CD4-positive, alpha-beta T cell (primary cell): ENCODE measurements at regions of chr5 and their contacts with region 1.

Region 1: GRCh38 chr5:150846654-150847333 is 473 bp downstream of the IRGM start:
- DNase-seq: peak; percentile 22 to 91 (median 44)
- ATAC-seq: peak; percentile 92
- H3K4me3 ChIP-seq: peak overlapping the region; percentile 48
- H3K4me3 Mint-ChIP-seq: peak overlapping the region; percentile 87
- H3K27ac ChIP-seq: peak overlapping the region in 1 of 2 donors; percentile 31
- H3K27ac Mint-ChIP-seq: peak overlapping the region; percentile 87
- H3K4me1 ChIP-seq: peaks cover 17% of the 10 kb centered on the region
- H3K4me1 Mint-ChIP-seq: peaks cover 31% of the 10 kb centered on the region
- H3K27me3 ChIP-seq: no peaks in the 10 kb centered on the region
- H3K27me3 Mint-ChIP-seq: no peaks in the 10 kb centered on the region
- CTCF ChIP-seq: peak; percentile 84

Region 2: DNA sequence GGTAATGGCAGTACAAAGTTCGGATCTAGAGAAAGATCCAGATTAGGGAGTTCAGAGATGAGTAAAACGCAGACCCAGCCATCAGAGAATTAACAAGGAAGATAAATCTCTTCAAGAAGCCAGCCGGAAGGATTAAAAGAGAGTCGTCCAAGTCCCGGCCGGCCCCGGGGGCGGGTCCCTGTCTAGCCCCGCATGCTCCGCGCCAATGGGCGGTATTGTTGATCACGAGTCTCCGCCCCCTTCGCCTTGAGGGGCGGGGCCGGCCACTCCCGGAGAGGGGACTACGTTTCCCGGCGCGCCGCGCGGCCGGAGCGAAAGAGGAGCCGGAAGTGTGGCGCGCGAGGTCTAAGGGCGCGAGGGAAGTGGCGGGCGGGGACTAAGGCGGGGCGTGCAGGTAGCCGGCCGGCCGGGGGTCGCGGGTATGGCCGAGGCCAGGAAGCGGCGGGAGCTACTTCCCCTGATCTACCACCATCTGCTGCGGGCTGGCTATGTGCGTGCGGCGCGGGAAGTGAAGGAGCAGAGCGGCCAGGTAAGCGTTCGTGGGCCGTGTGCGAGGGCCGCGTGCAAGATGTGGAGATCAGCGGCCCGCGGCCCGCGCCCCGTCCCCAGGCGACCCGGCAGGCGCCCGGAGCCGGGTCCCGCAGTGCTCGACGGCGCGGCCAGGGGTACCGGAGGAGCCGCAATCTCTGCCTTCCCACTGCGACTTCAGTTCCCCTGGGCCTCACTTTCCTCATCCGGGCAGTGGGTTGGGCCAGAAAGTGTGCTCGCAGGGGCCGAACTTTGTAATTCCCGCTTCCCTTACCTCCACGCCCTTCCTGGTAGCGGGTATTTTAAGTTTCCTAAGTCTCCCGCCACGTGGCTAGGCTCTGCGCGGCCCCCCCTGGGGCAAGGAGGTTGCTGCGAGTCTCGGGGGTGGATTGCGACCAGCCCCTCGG is 489.2 kb before region 1 on chr5 and contains the start of gene TCOF1:
- CTCF ChIA-PET with region 1: no interaction called
- POLR2A ChIA-PET with region 1: no interaction called
- intact Hi-C with region 1: loop called in 1 of 2 experiments (anchors 5 kb)
- DNase-seq: peak; percentile 93 to 98 (median 97)
- ATAC-seq: peak; percentile 98
- H3K4me3 ChIP-seq: peak within 1 kb of the TSS; percentile 86
- H3K4me3 Mint-ChIP-seq: peak within 1 kb of the TSS; percentile 89
- H3K27ac ChIP-seq: peak within 1 kb of the TSS in 1 of 2 donors; percentile 46
- H3K27ac Mint-ChIP-seq: peak within 1 kb of the TSS; percentile 73
- H3K4me1 ChIP-seq: peaks cover 28% of the 10 kb centered on the region
- H3K4me1 Mint-ChIP-seq: peaks cover 47% of the 10 kb centered on the region
- H3K27me3 ChIP-seq: no peaks in the 10 kb centered on the region
- H3K27me3 Mint-ChIP-seq: no peaks in the 10 kb centered on the region
- CTCF ChIP-seq: no peak
- total RNA-seq, gene TCOF1: 40.4 to 43.2 TPM

Region 3: DNA sequence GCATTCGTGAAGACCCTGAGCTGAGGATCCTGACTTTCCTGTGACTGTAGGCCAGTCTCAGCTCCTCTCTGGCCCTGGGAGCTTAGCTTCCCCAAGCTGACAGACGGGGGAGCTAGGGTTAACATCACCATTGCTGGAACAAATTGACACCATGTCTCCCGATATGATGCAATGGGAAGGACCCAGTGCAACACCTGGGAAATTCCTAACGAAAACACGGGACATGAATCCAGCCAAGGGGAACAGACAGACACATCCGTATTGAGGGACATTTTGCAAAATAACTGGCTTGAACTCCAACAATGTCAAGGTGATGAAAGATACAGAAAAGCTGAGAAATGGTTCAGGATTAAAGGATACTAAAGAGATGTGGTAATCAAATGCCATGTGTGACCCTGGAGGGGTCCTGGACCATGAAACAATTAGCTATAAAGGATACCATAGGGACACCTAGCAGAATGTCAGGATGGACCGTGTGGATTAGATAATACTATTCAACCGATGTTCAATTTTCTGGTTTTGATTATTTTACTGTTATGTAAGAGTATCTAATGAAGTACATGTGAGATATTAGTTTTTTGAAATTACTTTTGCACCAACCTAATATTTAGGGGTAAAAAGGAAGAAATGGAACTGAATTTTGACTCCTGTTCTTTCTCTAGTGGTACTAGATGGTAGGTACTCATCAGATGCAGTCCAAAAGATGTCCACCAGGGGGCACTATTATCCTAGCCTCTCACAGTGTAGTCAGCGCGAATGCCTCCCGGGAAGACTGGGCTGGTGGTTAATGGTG is 286.2 kb before region 1 on chr5:
- CTCF ChIA-PET with region 1: interaction called, 13 read pairs
- POLR2A ChIA-PET with region 1: interaction called, 4 read pairs
- intact Hi-C with region 1: loop called in 1 of 2 experiments (anchors 1 kb)
- DNase-seq: peak; percentile 58 to 93 (median 82)
- ATAC-seq: peak; percentile 98
- H3K4me3 ChIP-seq: no peak overlapping the region
- H3K4me3 Mint-ChIP-seq: no peak overlapping the region
- H3K27ac ChIP-seq: no peak overlapping the region
- H3K27ac Mint-ChIP-seq: no peak overlapping the region
- H3K4me1 ChIP-seq: no peaks in the 10 kb centered on the region
- H3K4me1 Mint-ChIP-seq: no peaks in the 10 kb centered on the region
- H3K27me3 ChIP-seq: no peaks in the 10 kb centered on the region
- H3K27me3 Mint-ChIP-seq: no peaks in the 10 kb centered on the region
- CTCF ChIP-seq: peak; percentile 88

Region 4: DNA sequence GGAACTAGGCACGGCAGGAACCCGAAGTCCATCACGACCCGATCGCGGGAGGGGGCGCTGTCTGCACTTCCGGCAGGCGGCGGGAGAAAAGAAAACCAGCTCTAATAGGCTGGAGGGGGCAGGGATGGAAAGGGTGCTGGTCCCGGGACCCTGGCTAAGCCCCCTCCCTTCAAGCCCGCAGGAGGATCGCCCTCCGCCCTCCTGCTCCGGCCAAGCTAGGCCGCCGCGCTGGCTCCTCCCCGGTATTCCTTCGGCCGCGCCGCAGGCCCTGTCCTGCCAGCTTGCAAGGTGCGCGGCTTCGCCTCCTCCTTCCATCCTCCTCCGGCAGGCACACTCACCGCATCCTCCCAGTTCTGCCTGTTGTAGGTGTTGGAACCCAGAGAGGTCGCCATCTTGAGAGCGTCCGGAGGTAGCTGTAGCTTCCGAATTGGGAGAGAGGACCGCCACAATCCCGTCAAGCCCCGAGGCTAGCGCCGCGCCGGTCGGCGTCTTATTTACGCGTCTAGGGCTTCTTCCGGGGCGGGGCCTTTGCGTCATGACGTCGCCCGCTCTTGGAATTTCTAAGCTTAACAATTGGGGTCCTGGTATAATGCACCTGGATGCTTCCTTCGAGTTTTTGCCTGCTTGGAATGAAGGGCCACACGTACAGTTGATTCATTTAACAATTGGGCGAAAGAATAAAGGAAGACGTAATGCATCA is 146.1 kb before region 1 on chr5 and contains the start of gene RBM22:
- CTCF ChIA-PET with region 1: interaction called, 17 read pairs
- POLR2A ChIA-PET with region 1: interaction called, 41 read pairs
- intact Hi-C with region 1: loop called (anchors 1 to 2 kb)
- DNase-seq: peak; percentile 84 to 96 (median 90)
- ATAC-seq: peak; percentile 89
- H3K4me3 ChIP-seq: peak within 1 kb of the TSS; percentile 83
- H3K4me3 Mint-ChIP-seq: no peak within 1 kb of the TSS
- H3K27ac ChIP-seq: peak within 1 kb of the TSS; percentile 95 to 98
- H3K27ac Mint-ChIP-seq: no peak within 1 kb of the TSS
- H3K4me1 ChIP-seq: peaks cover 6% of the 10 kb centered on the region
- H3K4me1 Mint-ChIP-seq: no peaks in the 10 kb centered on the region
- H3K27me3 ChIP-seq: no peaks in the 10 kb centered on the region
- H3K27me3 Mint-ChIP-seq: no peaks in the 10 kb centered on the region
- CTCF ChIP-seq: peak; percentile 75
- total RNA-seq, gene RBM22: 98.2 to 101 TPM

Region 5: GRCh38 chr5:150778517-150779396 is 68.0 kb before region 1 on chr5 and contains the start of gene SMIM3:
- CTCF ChIA-PET with region 1: interaction called, 26 read pairs
- POLR2A ChIA-PET with region 1: interaction called, 20 read pairs
- intact Hi-C with region 1: no loop called
- DNase-seq: peak; percentile 53 to 84 (median 68)
- ATAC-seq: peak; percentile 63
- H3K4me3 ChIP-seq: peak within 1 kb of the TSS; percentile 96
- H3K4me3 Mint-ChIP-seq: peak within 1 kb of the TSS; percentile 99
- H3K27ac ChIP-seq: peak within 1 kb of the TSS; percentile 62 to 70
- H3K27ac Mint-ChIP-seq: peak within 1 kb of the TSS; percentile 90
- H3K4me1 ChIP-seq: peaks cover 56% of the 10 kb centered on the region
- H3K4me1 Mint-ChIP-seq: peaks cover 58% of the 10 kb centered on the region
- H3K27me3 ChIP-seq: no peaks in the 10 kb centered on the region
- H3K27me3 Mint-ChIP-seq: no peaks in the 10 kb centered on the region
- CTCF ChIP-seq: peak; percentile 41
- total RNA-seq, gene SMIM3: 2.9 TPM

Region 6: GRCh38 chr5:150801117-150801927 is 45.5 kb before region 1 on chr5:
- CTCF ChIA-PET with region 1: interaction called, 28 read pairs
- POLR2A ChIA-PET with region 1: interaction called, 6 read pairs
- intact Hi-C with region 1: loop called (anchors 1 kb)
- DNase-seq: peak in 3 of 14 experiments; percentile 62 to 74 (median 70)
- ATAC-seq: peak; percentile 49
- H3K4me3 ChIP-seq: no peak overlapping the region
- H3K4me3 Mint-ChIP-seq: no peak overlapping the region
- H3K27ac ChIP-seq: no peak overlapping the region
- H3K27ac Mint-ChIP-seq: no peak overlapping the region
- H3K4me1 ChIP-seq: peaks cover 7% of the 10 kb centered on the region
- H3K4me1 Mint-ChIP-seq: peaks cover 5% of the 10 kb centered on the region
- H3K27me3 ChIP-seq: no peaks in the 10 kb centered on the region
- H3K27me3 Mint-ChIP-seq: no peaks in the 10 kb centered on the region
- CTCF ChIP-seq: peak; percentile 77